Ovary (tissue), 10 donors: ENCODE measurements at regions of chr9 and their contacts with region 1.

Region 1: DNA sequence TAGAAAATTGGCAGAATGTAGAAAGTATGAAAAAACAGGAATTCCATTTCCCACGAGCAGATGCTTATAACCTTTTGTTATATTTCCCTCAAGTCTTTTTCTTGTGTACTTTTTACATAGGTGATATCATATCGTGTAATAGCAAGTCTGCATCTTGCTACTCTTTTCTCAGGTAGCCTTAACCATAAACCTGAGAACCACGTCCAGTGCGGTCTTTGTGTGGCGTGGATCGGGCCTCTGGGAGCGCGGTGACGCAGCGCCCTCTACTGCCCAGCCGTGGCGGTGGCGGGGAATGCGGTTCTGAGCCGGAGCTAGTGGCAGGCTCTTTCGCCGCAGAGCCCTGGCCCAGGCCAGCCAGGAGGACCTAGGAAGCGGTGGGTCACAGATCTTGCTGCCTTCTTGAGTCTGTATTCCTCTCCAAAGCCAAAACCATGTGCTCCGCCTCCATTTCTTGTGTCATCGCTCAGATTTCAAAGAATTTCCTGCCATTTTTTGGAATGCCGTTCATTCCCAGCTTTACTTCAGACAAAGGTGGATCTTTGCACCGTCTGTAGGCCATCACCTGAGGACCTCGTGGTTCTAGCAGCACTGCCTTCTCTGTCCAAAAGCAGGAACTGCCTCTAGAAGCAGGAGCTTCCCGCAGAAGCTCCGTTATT is 71.9 kb downstream of the MVB12B start:
- DNase-seq: peak; percentile 62 to 87 (median 80)
- H3K4me3 ChIP-seq: no peak overlapping the region
- H3K27ac ChIP-seq: no peak overlapping the region
- H3K4me1 ChIP-seq: no peaks in the 10 kb centered on the region
- H3K27me3 ChIP-seq: no peaks in the 10 kb centered on the region
- CTCF ChIP-seq: peak; percentile 83 to 88 (median 88)
- EP300 ChIP-seq: no peak
- POLR2A ChIP-seq: no peak

Region 2: DNA sequence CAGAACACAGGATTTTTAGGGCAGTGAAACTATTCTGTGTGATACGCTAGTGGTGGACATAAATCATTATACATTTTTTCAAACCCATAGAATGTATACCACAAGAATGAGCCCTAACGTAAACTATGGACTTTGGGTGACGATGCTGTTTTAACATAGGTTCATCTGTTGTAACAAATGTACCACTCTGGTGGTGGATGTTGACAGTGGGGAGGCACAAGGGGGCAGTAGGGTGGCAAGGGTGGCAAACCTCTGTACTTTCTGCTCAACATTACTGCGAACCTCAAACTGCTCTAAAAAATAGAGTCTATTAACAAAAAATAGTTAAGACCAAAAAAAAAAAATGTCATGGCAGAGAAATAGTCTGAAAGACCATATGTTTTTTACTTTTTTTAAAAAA is 81.0 kb before region 1 on chr9:
- intact Hi-C with region 1: loop called in 1 of 4 experiments (anchors 10 kb)
- DNase-seq: no peak
- H3K4me3 ChIP-seq: no peak overlapping the region
- H3K27ac ChIP-seq: no peak overlapping the region
- H3K4me1 ChIP-seq: no peaks in the 10 kb centered on the region
- H3K27me3 ChIP-seq: no peaks in the 10 kb centered on the region
- CTCF ChIP-seq: no peak
- EP300 ChIP-seq: no peak
- POLR2A ChIP-seq: no peak

Region 3: GRCh38 chr9:126456441-126457174 is 58.1 kb after region 1 on chr9:
- intact Hi-C with region 1: no loop called
- DNase-seq: peak in 1 of 5 donors; percentile 5
- H3K4me3 ChIP-seq: no peak overlapping the region
- H3K27ac ChIP-seq: no peak overlapping the region
- H3K4me1 ChIP-seq: peaks cover 4% of the 10 kb centered on the region
- H3K27me3 ChIP-seq: no peaks in the 10 kb centered on the region
- CTCF ChIP-seq: no peak
- EP300 ChIP-seq: no peak
- POLR2A ChIP-seq: no peak

Region 4: GRCh38 chr9:126490871-126491567 is 92.5 kb after region 1 on chr9:
- intact Hi-C with region 1: loop called in 2 of 4 experiments (anchors 5 to 10 kb)
- DNase-seq: peak in 1 of 5 donors; percentile 65
- H3K4me3 ChIP-seq: no peak overlapping the region
- H3K27ac ChIP-seq: no peak overlapping the region
- H3K4me1 ChIP-seq: no peaks in the 10 kb centered on the region
- H3K27me3 ChIP-seq: no peaks in the 10 kb centered on the region
- CTCF ChIP-seq: peak; percentile 48 to 90 (median 86)
- EP300 ChIP-seq: no peak
- POLR2A ChIP-seq: no peak